CD4-positive, alpha-beta T cell (primary cell): ENCODE measurements at regions of chr17 and their contacts with region 1.

Region 1: DNA sequence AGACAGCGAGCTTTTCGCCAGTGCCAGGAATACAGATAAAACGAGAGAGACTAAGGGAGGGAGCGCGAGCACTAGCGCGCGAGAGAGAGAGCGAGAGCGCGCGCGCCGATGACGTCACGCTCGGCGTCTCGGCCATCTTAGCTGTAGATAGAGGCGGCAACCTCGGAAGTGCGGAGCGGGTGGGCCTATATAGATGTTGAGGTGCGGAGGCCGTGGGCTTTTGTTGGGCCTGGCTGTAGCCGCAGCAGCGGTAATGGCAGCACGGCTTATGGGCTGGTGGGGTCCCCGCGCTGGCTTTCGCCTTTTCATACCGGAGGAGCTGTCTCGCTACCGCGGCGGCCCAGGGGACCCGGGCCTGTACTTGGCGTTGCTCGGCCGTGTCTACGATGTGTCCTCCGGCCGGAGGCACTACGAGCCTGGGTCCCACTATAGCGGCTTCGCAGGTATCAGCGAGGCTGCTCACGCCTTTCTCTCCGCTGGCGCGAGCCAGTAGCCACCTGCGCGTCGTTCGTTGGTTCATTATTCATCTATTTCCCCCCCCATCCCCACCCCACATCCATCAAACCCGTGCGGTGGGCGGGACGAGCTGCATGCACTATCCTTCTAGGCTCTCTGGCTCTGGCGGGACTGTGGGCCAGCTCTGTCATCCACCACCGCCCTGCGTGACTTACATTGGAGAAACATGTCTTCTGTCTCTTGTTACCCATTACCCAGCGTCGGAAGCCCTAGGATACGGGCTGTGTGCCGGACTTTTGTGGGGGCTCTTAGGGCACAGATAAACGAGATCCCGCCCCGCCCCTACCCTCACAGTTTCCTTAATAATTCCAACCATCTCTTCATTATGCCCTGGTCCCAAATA is 795 bp downstream of the CYB5D2 start:
- DNase-seq: peak; percentile 85 to 98 (median 90)
- ATAC-seq: peak; percentile 67
- H3K4me3 ChIP-seq: peak overlapping the region; percentile 95
- H3K4me3 Mint-ChIP-seq: peak overlapping the region; percentile 96
- H3K27ac ChIP-seq: peak overlapping the region; percentile 98 to 100
- H3K27ac Mint-ChIP-seq: peak overlapping the region; percentile 100
- H3K4me1 ChIP-seq: peaks cover 44% of the 10 kb centered on the region
- H3K4me1 Mint-ChIP-seq: peaks cover 49% of the 10 kb centered on the region
- H3K27me3 ChIP-seq: no peaks in the 10 kb centered on the region
- H3K27me3 Mint-ChIP-seq: no peaks in the 10 kb centered on the region
- CTCF ChIP-seq: no peak

Region 2: DNA sequence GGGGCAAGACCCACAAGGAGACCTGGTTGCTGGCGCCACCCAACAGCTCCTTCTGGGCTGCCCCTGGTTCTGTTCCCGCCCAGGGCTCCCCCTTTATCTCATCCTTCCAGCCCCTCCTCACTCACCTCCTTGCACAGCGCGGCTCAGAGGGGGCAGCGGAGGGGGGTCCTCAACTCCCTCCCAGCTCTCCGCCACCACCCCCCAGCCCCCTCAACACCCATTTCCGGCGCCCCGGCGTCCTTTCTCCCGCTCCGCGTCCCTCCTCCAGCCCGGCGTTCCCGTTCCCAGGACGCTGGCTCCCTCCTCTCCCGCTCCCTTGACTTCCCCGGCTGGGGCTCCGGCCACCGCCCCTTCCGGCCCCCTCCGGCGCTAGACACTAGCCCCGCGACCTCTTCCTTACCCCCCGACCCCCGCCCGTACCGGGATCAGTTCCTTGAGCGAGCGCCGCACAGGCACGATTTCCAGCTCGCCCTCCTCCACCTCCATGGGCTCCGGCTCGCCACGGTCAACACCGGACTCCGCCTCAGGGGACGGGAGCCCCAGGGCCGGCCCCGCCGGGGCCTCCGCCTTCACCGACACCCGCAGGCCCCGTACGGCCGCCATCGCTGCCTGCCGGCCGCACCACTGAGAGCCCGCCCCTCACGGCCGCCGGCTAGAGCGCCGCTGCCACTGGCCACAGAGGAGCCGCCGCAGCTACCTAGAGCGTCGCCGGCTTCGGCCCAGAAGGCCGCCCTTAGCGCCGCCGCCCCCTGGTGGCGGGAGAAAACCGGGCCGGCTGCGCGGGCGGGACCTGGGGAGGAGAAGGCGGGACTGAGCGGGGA is 298.0 kb before region 1 on chr17 and contains the start of gene NCBP3:
- CTCF ChIA-PET with region 1: no interaction called
- POLR2A ChIA-PET with region 1: interaction called, 21 read pairs
- intact Hi-C with region 1: loop called in 1 of 2 experiments (anchors 5 kb)
- DNase-seq: peak; percentile 79 to 97 (median 90)
- ATAC-seq: peak; percentile 90
- H3K4me3 ChIP-seq: peak within 1 kb of the TSS; percentile 100
- H3K4me3 Mint-ChIP-seq: peak within 1 kb of the TSS; percentile 95
- H3K27ac ChIP-seq: peak within 1 kb of the TSS; percentile 70 to 77
- H3K27ac Mint-ChIP-seq: peak within 1 kb of the TSS; percentile 82
- H3K4me1 ChIP-seq: peaks cover 30% of the 10 kb centered on the region
- H3K4me1 Mint-ChIP-seq: peaks cover 28% of the 10 kb centered on the region
- H3K27me3 ChIP-seq: no peaks in the 10 kb centered on the region
- H3K27me3 Mint-ChIP-seq: no peaks in the 10 kb centered on the region
- CTCF ChIP-seq: peak; percentile 82
- total RNA-seq, gene NCBP3: 25.0 to 29.5 TPM

Region 3: DNA sequence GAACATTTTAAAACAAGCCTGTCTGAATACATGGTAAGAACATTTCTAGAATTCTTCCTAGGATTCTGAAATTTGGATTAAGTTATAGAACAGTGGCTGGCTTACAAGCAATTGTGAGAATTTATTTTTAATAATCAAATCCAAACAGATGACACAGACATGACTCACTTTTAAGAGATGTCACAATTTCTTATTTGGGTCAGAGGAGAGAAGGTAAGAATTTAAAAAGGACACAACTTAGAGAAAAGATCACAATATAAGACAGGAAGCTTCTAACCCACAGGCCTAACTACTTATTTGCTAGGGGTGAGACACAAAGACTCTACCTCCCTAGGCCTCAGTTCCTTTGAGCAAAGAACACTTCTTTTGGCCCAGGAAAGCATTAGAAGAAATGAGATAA is 33.6 kb before region 1 on chr17:
- CTCF ChIA-PET with region 1: no interaction called
- POLR2A ChIA-PET with region 1: interaction called, 18 read pairs
- intact Hi-C with region 1: no loop called
- DNase-seq: peak in 1 of 14 experiments; percentile 24
- ATAC-seq: peak; percentile 47
- H3K4me3 ChIP-seq: no peak overlapping the region
- H3K4me3 Mint-ChIP-seq: no peak overlapping the region
- H3K27ac ChIP-seq: peak overlapping the region in 1 of 2 donors; percentile 37
- H3K27ac Mint-ChIP-seq: peak overlapping the region; percentile 70
- H3K4me1 ChIP-seq: peaks cover 31% of the 10 kb centered on the region
- H3K4me1 Mint-ChIP-seq: peaks cover 29% of the 10 kb centered on the region
- H3K27me3 ChIP-seq: no peaks in the 10 kb centered on the region
- H3K27me3 Mint-ChIP-seq: no peaks in the 10 kb centered on the region
- CTCF ChIP-seq: no peak

Region 4: GRCh38 chr17:4175921-4176807 is 32.4 kb after region 1 on chr17:
- CTCF ChIA-PET with region 1: interaction called, 6 read pairs
- POLR2A ChIA-PET with region 1: interaction called, 171 read pairs
- intact Hi-C with region 1: loop called (anchors 2 to 5 kb)
- DNase-seq: peak in 13 of 14 experiments; percentile 12 to 71 (median 38)
- ATAC-seq: peak; percentile 78
- H3K4me3 ChIP-seq: peak overlapping the region; percentile 16
- H3K4me3 Mint-ChIP-seq: peak overlapping the region; percentile 66
- H3K27ac ChIP-seq: peak overlapping the region; percentile 70 to 85
- H3K27ac Mint-ChIP-seq: peak overlapping the region; percentile 90
- H3K4me1 ChIP-seq: peaks cover 57% of the 10 kb centered on the region
- H3K4me1 Mint-ChIP-seq: peaks cover 61% of the 10 kb centered on the region
- H3K27me3 ChIP-seq: no peaks in the 10 kb centered on the region
- H3K27me3 Mint-ChIP-seq: no peaks in the 10 kb centered on the region
- CTCF ChIP-seq: no peak

Region 5: GRCh38 chr17:4329838-4330237 is 186.0 kb after region 1 on chr17:
- CTCF ChIA-PET with region 1: no interaction called
- POLR2A ChIA-PET with region 1: no interaction called
- intact Hi-C with region 1: no loop called
- DNase-seq: no peak
- ATAC-seq: no peak
- H3K4me3 ChIP-seq: no peak overlapping the region
- H3K4me3 Mint-ChIP-seq: no peak overlapping the region
- H3K27ac ChIP-seq: no peak overlapping the region
- H3K27ac Mint-ChIP-seq: no peak overlapping the region
- H3K4me1 ChIP-seq: peaks cover 17% of the 10 kb centered on the region
- H3K4me1 Mint-ChIP-seq: peaks cover 67% of the 10 kb centered on the region
- H3K27me3 ChIP-seq: no peaks in the 10 kb centered on the region
- H3K27me3 Mint-ChIP-seq: no peaks in the 10 kb centered on the region
- CTCF ChIP-seq: no peak

Region 6: DNA sequence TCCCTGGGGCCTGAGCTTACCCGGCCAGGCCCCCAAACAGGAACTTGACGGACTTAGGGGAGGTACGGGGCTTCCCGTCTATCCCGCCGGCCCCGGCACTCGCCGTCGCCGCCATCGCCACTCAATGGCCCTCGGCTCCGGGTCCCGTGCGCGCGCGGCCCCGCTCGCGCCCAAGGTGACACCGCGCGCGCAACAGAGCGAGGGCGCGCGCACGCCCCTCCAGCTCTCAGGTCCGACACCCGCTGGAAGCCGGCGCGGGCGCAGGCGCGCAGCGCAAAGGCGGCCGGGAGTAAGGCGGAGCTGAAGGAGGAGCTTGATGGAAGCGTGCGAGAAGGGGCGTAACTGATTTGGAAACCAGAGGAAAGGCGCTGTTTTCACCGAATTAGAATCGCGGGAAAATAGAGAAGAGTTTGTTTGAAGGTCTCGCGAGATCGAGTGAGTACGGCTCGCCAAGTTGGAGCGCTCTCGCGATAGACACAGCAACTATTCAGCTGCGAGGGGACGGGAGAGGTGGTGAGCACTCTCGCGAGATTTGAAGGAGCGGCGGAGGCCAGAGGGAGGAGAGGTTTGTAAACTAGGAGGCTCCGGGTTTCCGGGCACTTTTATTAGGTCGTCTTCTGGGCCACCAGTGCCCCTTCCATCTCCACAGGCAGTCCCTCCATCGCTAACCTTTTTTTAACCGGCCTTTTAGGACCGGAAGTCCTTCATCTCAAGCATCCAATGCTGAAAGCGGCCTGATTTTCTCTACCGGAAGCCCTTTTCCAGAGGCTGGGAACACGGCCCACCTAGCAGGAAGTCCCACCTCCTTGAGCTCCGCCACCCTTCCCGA is 796.2 kb after region 1 on chr17 and contains the starts of genes RNF167 and SLC25A11:
- CTCF ChIA-PET with region 1: no interaction called
- POLR2A ChIA-PET with region 1: interaction called, 11 read pairs
- intact Hi-C with region 1: no loop called
- DNase-seq: peak; percentile 91 to 100 (median 95)
- ATAC-seq: peak; percentile 83
- H3K4me3 ChIP-seq: peak within 1 kb of the TSS; percentile 100
- H3K4me3 Mint-ChIP-seq: peak within 1 kb of the TSS; percentile 99
- H3K27ac ChIP-seq: peak within 1 kb of the TSS; percentile 89 to 91
- H3K27ac Mint-ChIP-seq: peak within 1 kb of the TSS; percentile 90
- H3K4me1 ChIP-seq: peaks cover 66% of the 10 kb centered on the region
- H3K4me1 Mint-ChIP-seq: peaks cover 59% of the 10 kb centered on the region
- H3K27me3 ChIP-seq: no peaks in the 10 kb centered on the region
- H3K27me3 Mint-ChIP-seq: no peaks in the 10 kb centered on the region
- CTCF ChIP-seq: no peak
- total RNA-seq, gene RNF167: 59.3 to 62.8 TPM
- total RNA-seq, gene SLC25A11: 20.8 to 21.9 TPM